Naive thymus-derived CD4-positive, alpha-beta T cell (primary cell): ENCODE measurements at regions of chr4 and their contacts with region 1.

Region 1: DNA sequence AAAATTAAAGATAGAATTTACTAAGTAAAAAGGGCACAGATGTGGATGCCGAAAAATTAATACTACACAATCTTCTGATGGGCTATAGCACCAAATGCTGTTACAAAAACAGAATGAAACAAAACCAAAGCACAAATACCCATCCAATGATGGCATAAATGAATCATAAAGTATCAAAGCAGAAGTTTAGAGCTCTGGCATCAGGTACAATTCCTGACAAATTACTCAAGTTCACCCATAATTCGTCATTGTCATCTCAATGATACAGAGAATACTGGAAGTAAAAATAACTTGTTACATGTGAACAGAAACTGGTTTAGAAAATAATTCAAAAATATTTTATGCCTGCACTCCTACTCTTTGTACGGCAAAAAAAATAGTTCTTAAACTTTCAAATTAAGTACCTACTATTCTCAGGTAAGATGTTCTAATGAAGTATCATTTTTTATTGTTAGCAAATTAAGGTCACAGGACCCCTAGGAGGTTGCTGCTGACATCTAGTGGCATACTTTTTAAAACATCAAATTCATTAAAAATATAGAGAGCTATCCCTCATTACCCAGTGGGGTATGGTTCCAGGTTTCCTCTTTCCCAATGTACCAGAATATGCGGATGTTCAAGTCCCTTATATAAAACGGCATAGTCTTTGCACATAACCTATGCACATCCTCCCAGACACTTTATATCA is 126.1 kb downstream of the INPP4B start:
- DNase-seq: peak in 6 of 9 donors; percentile 22 to 64 (median 58)
- ATAC-seq: peak; percentile 75
- H3K4me3 ChIP-seq: no peak overlapping the region
- H3K4me3 Mint-ChIP-seq: peak overlapping the region in 6 of 10 donors; percentile 16 to 51 (median 37)
- H3K27ac ChIP-seq: peak overlapping the region; percentile 43
- H3K27ac Mint-ChIP-seq: peak overlapping the region in 6 of 9 donors; percentile 43 to 91 (median 68)
- H3K4me1 ChIP-seq: peaks cover 0 to 10% of the 10 kb centered on the region in 2 donors
- H3K4me1 Mint-ChIP-seq: peaks cover 3 to 49% (median 30%) of the 10 kb centered on the region in 7 donors
- H3K27me3 ChIP-seq: no peaks in the 10 kb centered on the region
- H3K27me3 Mint-ChIP-seq: no peaks in the 10 kb centered on the region

Region 2: DNA sequence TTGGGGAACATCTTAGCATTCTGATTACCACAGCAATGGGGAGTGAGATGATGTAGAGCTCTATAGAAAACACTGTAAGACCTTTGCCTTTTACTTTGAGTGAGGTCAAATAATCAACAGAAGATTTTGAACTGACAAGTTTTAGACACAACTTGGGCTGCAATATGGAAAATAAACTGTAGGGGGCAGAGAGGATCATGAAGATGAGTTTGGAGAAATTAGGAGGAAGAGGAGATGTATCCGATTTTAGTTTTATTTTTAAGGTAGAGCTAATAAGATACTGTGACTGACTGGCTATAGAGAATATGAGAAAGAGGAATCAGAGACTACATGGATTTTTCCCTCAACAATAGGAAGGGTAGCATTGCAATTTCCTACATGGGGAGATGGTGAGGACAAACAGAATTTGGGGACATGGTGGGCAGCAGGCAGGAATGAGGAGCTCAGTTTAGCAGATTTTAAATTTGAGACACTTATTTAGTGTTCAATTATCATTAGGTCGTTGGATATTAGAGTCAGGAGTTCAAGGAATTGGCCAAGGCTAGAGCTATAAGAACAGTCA is 437.0 kb before region 1 on chr4:
- CTCF ChIA-PET with region 1: interaction called, 14 read pairs
- POLR2A ChIA-PET with region 1: interaction called, 5 read pairs
- intact Hi-C with region 1: loop called (anchors 1 kb)
- DNase-seq: peak in 7 of 9 donors; percentile 26 to 53 (median 38)
- ATAC-seq: peak; percentile 64
- H3K4me3 ChIP-seq: no peak overlapping the region
- H3K4me3 Mint-ChIP-seq: no peak overlapping the region
- H3K27ac ChIP-seq: no peak overlapping the region
- H3K27ac Mint-ChIP-seq: no peak overlapping the region
- H3K4me1 ChIP-seq: peaks cover 7 to 15% of the 10 kb centered on the region in 2 donors
- H3K4me1 Mint-ChIP-seq: peaks cover 9 to 35% (median 25%) of the 10 kb centered on the region in 7 donors
- H3K27me3 ChIP-seq: no peaks in the 10 kb centered on the region
- H3K27me3 Mint-ChIP-seq: no peaks in the 10 kb centered on the region

Region 3: GRCh38 chr4:142487824-142488223 is 232.2 kb before region 1 on chr4:
- CTCF ChIA-PET with region 1: no interaction called
- POLR2A ChIA-PET with region 1: no interaction called
- intact Hi-C with region 1: no loop called
- DNase-seq: no peak
- ATAC-seq: no peak
- H3K4me3 ChIP-seq: no peak overlapping the region
- H3K4me3 Mint-ChIP-seq: no peak overlapping the region
- H3K27ac ChIP-seq: no peak overlapping the region
- H3K27ac Mint-ChIP-seq: no peak overlapping the region
- H3K4me1 ChIP-seq: peaks cover 0 to 9% of the 10 kb centered on the region in 2 donors
- H3K4me1 Mint-ChIP-seq: peaks cover 0 to 34% (median 25%) of the 10 kb centered on the region in 7 donors
- H3K27me3 ChIP-seq: no peaks in the 10 kb centered on the region
- H3K27me3 Mint-ChIP-seq: no peaks in the 10 kb centered on the region

Region 4: DNA sequence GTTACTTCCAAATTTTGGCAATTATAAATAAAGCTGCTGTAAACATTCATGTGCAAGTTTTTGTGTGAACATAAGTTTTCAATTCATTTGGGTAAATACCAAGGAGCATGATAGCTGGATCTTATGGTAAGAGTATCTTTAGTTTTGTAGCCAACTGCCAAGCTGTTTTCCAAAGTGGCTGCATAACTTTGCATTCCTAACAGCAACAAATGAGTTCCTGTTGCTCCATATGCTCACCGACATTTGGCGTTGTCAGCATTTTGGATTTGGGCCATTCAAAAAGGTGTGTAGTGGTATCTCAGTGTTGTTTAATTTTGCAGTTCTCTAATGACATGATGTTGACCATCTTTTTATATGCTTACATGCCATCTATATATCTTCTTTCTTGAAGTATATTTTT is 82.4 kb before region 1 on chr4:
- CTCF ChIA-PET with region 1: no interaction called
- POLR2A ChIA-PET with region 1: no interaction called
- intact Hi-C with region 1: no loop called
- DNase-seq: no peak
- ATAC-seq: no peak
- H3K4me3 ChIP-seq: no peak overlapping the region
- H3K4me3 Mint-ChIP-seq: no peak overlapping the region
- H3K27ac ChIP-seq: no peak overlapping the region
- H3K27ac Mint-ChIP-seq: no peak overlapping the region
- H3K4me1 ChIP-seq: no peaks in the 10 kb centered on the region
- H3K4me1 Mint-ChIP-seq: no peaks in the 10 kb centered on the region
- H3K27me3 ChIP-seq: no peaks in the 10 kb centered on the region
- H3K27me3 Mint-ChIP-seq: no peaks in the 10 kb centered on the region

Region 5: DNA sequence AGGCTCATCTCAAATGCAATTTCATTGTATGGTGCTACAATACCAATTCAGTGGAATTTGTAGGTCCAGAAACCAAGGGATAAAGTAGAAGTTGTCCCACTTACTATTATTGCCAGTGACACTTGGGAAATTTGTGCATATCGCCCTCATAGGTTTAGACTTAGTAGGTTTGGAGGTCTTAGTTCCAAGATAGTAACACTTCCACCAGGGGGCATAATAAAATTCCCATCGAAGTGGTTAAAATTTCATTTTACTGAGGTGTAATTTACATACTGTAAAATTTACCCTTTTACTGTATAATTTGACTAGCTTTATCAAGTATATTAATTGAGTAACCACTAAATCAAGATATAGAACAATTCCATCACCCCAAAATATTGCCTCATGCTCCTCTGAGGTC is 48.5 kb before region 1 on chr4:
- CTCF ChIA-PET with region 1: interaction called, 3 read pairs
- POLR2A ChIA-PET with region 1: no interaction called
- intact Hi-C with region 1: loop called in 1 of 2 experiments (anchors 1 kb)
- DNase-seq: no peak
- ATAC-seq: no peak
- H3K4me3 ChIP-seq: no peak overlapping the region
- H3K4me3 Mint-ChIP-seq: no peak overlapping the region
- H3K27ac ChIP-seq: no peak overlapping the region
- H3K27ac Mint-ChIP-seq: peak overlapping the region in 1 of 9 donors; percentile 46
- H3K4me1 ChIP-seq: no peaks in the 10 kb centered on the region
- H3K4me1 Mint-ChIP-seq: peaks cover 0 to 13% (median 5%) of the 10 kb centered on the region in 7 donors
- H3K27me3 ChIP-seq: no peaks in the 10 kb centered on the region
- H3K27me3 Mint-ChIP-seq: no peaks in the 10 kb centered on the region

Region 6: GRCh38 chr4:142696334-142697122 is 23.5 kb before region 1 on chr4:
- CTCF ChIA-PET with region 1: interaction called, 3 read pairs
- POLR2A ChIA-PET with region 1: interaction called, 135 read pairs
- intact Hi-C with region 1: loop called in 1 of 2 experiments (anchors 2 kb)
- DNase-seq: peak in 7 of 9 donors; percentile 25 to 49 (median 44)
- ATAC-seq: peak; percentile 77
- H3K4me3 ChIP-seq: peak overlapping the region; percentile 19
- H3K4me3 Mint-ChIP-seq: peak overlapping the region; percentile 31 to 87 (median 75)
- H3K27ac ChIP-seq: peak overlapping the region; percentile 65
- H3K27ac Mint-ChIP-seq: peak overlapping the region in 8 of 9 donors; percentile 87 to 98 (median 95)
- H3K4me1 ChIP-seq: peaks cover 41 to 64% of the 10 kb centered on the region in 2 donors
- H3K4me1 Mint-ChIP-seq: peaks cover 38 to 88% (median 72%) of the 10 kb centered on the region in 7 donors
- H3K27me3 ChIP-seq: no peaks in the 10 kb centered on the region
- H3K27me3 Mint-ChIP-seq: no peaks in the 10 kb centered on the region

Region 7: DNA sequence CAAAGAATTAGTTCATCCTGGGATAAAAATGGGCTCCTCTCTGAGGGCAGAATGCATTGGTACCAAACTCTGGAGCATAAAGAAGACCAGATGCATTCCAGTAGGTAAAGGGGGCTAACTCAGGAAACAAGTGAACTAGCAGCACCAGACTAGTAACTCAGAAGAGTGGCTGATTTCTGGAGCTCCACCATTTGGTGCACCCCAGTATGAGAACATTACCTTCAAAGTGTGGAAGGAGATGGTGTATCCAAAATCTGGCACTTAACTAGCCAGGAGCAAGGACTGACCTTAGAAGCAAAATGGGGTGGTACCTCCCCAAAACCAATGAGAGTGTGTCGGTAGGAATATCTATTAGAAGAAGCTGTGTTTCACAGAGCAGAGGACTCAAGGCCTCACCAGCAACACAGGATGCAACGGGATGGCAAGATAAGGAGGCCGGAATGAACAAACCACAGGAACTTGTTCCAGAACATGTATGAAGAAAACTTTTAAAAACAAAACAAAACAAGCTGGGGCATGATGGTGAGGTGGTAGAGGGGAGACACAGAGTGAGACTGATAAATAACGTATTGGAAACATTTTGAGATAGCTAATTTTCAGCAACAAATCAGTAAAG is 16.2 kb before region 1 on chr4:
- CTCF ChIA-PET with region 1: interaction called, 4 read pairs
- POLR2A ChIA-PET with region 1: interaction called, 135 read pairs
- intact Hi-C with region 1: loop called in 1 of 2 experiments (anchors 2 kb)
- DNase-seq: peak in 7 of 9 donors; percentile 51 to 71 (median 58)
- ATAC-seq: peak; percentile 76
- H3K4me3 ChIP-seq: peak overlapping the region; percentile 14
- H3K4me3 Mint-ChIP-seq: no peak overlapping the region
- H3K27ac ChIP-seq: peak overlapping the region; percentile 54
- H3K27ac Mint-ChIP-seq: no peak overlapping the region
- H3K4me1 ChIP-seq: peaks cover 51 to 94% of the 10 kb centered on the region in 2 donors
- H3K4me1 Mint-ChIP-seq: peaks cover 20 to 35% (median 32%) of the 10 kb centered on the region in 7 donors
- H3K27me3 ChIP-seq: no peaks in the 10 kb centered on the region
- H3K27me3 Mint-ChIP-seq: no peaks in the 10 kb centered on the region

Region 8: GRCh38 chr4:144547678-144548298 is 1827.8 kb after region 1 on chr4:
- CTCF ChIA-PET with region 1: no interaction called
- POLR2A ChIA-PET with region 1: no interaction called
- intact Hi-C with region 1: no loop called
- DNase-seq: no peak
- ATAC-seq: no peak
- H3K4me3 ChIP-seq: no peak overlapping the region
- H3K4me3 Mint-ChIP-seq: no peak overlapping the region
- H3K27ac ChIP-seq: no peak overlapping the region
- H3K27ac Mint-ChIP-seq: no peak overlapping the region
- H3K4me1 ChIP-seq: no peaks in the 10 kb centered on the region
- H3K4me1 Mint-ChIP-seq: no peaks in the 10 kb centered on the region
- H3K27me3 ChIP-seq: no peaks in the 10 kb centered on the region
- H3K27me3 Mint-ChIP-seq: no peaks in the 10 kb centered on the region

Region 9: DNA sequence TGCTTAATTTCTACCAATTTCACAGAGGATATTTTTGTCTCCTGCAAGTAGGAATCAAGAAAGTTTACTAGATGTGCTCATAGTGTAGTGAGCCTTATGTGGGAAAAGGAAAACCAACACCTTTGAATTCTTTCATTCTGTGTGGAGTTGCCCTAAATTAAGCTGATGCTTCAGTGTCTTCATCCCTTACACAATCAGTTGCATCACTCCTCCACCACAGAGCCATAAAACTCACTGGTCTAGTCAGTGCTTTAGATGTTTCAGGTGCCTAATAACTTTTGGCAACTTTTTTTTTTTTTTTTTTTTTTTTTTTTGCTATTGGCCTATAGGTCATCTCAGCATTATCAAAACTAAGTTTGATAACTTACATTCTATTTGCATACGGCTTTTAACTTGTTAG is 1967.5 kb after region 1 on chr4:
- CTCF ChIA-PET with region 1: no interaction called
- POLR2A ChIA-PET with region 1: no interaction called
- intact Hi-C with region 1: no loop called
- DNase-seq: no peak
- ATAC-seq: no peak
- H3K4me3 ChIP-seq: no peak overlapping the region
- H3K4me3 Mint-ChIP-seq: no peak overlapping the region
- H3K27ac ChIP-seq: no peak overlapping the region
- H3K27ac Mint-ChIP-seq: no peak overlapping the region
- H3K4me1 ChIP-seq: no peaks in the 10 kb centered on the region
- H3K4me1 Mint-ChIP-seq: no peaks in the 10 kb centered on the region
- H3K27me3 ChIP-seq: no peaks in the 10 kb centered on the region
- H3K27me3 Mint-ChIP-seq: peaks cover 0 to 5% (median 0%) of the 10 kb centered on the region in 5 donors